ENCODE measurements at regions of chr7 and their contacts with region 1.

Region 1: GRCh38 chr7:143240291-143241168 is 18.7 kb downstream of the TAS2R40 start:
- DNase-seq: peak; percentile 65 to 87 (median 77)
- H3K4me3 ChIP-seq: no peak overlapping the region
- H3K27ac ChIP-seq: peak overlapping the region in 3 of 5 donors; percentile 18 to 65 (median 56)
- H3K4me1 ChIP-seq: peaks cover 0 to 4% of the 10 kb centered on the region in 2 donors
- H3K27me3 ChIP-seq: no peaks in the 10 kb centered on the region
- CTCF ChIP-seq: peak; percentile 82 to 96 (median 88)
- POLR2A ChIP-seq: no peak

Region 2: DNA sequence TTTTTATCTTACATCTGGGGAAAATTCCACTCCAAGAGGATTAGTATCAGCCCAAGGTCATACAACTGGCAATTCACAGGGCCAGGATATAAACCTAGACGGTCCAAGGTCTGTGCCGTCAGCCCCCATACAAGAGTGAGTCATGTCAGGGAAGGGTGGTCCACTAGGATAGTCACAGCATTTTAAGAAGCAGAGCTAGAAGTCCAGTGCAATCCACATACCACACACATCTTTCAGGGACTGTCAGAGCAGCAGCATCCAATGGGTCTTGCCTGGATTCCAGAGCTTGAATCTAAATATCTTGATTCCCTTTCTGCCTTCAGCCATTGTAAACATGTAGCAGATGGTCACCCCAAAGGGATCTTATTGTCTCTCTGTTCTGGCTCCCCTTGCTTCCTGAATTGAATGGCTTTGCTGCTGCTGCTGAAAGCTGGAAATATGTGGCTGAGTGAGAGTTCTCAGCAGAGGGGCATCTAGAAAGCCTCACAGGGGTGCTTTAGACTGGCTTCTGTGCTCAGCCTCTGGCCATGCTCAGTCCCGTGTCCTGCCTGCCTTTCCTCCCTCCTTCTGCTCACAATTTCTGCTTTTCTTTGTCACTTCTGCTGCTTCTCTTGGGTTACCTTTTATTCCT is 198.3 kb before region 1 on chr7:
- intact Hi-C with region 1: no loop called
- DNase-seq: no peak
- H3K4me3 ChIP-seq: no peak overlapping the region
- H3K27ac ChIP-seq: no peak overlapping the region
- H3K4me1 ChIP-seq: no peaks in the 10 kb centered on the region
- H3K27me3 ChIP-seq: no peaks in the 10 kb centered on the region
- CTCF ChIP-seq: no peak
- POLR2A ChIP-seq: no peak

Region 3: GRCh38 chr7:143069912-143070500 is 170.5 kb before region 1 on chr7:
- intact Hi-C with region 1: no loop called
- DNase-seq: no peak
- H3K4me3 ChIP-seq: no peak overlapping the region
- H3K27ac ChIP-seq: no peak overlapping the region
- H3K4me1 ChIP-seq: no peaks in the 10 kb centered on the region
- H3K27me3 ChIP-seq: no peaks in the 10 kb centered on the region
- CTCF ChIP-seq: no peak
- POLR2A ChIP-seq: no peak

Region 4: DNA sequence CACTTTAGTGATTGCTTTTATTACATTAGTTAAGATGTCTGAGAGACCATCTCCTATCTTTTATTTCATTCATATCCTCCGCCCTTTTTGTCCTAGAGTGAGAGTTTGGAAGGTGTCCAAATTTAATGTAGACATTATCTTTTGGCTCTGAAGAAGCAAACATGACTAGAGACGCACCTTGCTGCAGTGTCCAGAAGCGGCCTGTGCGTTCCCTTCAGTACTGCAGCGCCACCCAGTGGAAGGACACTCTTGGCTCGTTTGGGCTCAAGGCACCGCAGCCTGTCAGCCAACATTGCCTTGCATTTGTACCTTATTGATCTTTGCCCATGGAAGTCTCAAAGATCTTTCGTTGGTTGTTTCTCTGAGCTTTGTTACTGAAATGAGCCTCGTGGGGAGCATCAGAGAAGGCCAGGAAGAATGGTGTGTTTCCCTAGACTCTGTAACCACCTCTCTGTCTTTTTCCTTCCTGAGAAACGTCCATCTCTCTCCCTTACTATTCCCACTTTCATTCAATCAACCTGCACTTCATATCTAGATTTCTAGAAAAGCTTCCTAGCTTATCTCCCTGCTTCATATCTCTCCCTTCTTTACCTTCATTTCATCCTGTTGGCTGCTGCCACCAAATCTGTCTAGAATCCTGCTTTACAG is 65.0 kb after region 1 on chr7:
- intact Hi-C with region 1: loop called in 1 of 2 experiments (anchors 5 kb)
- DNase-seq: peak; percentile 58 to 86 (median 76)
- H3K4me3 ChIP-seq: no peak overlapping the region
- H3K27ac ChIP-seq: no peak overlapping the region
- H3K4me1 ChIP-seq: no peaks in the 10 kb centered on the region
- H3K27me3 ChIP-seq: no peaks in the 10 kb centered on the region
- CTCF ChIP-seq: peak; percentile 64 to 79 (median 71)
- POLR2A ChIP-seq: no peak

Measured in adrenal gland (tissue), 19 donors.